Activated naive CD4-positive, alpha-beta T cell treated with anti-CD3 and anti-CD28 coated beads for 36 hours (primary cell): ENCODE measurements at regions of chr14 and their contacts with region 1.

Region 1: GRCh38 chr14:99793213-99794150 is at the start of gene EML1:
- DNase-seq: peak; percentile 77
- H3K4me3 Mint-ChIP-seq: peak within 1 kb of the TSS; percentile 58
- H3K27ac Mint-ChIP-seq: peak within 1 kb of the TSS; percentile 15
- H3K4me1 Mint-ChIP-seq: peaks cover 21% of the 10 kb centered on the region
- H3K27me3 Mint-ChIP-seq: peaks cover 14% of the 10 kb centered on the region
- total RNA-seq, gene EML1: 0.91 to 1.2 TPM

Region 2: GRCh38 chr14:99749142-99749541 is 44.3 kb before region 1 on chr14:
- CTCF ChIA-PET with region 1: no interaction called
- intact Hi-C with region 1: loop called (anchors 10 kb)
- DNase-seq: no peak
- H3K4me3 Mint-ChIP-seq: no peak overlapping the region
- H3K27ac Mint-ChIP-seq: no peak overlapping the region
- H3K4me1 Mint-ChIP-seq: peaks cover 25% of the 10 kb centered on the region
- H3K27me3 Mint-ChIP-seq: peaks cover 19% of the 10 kb centered on the region